Activated CD4-positive, alpha-beta memory T cell treated with anti-CD3 and anti-CD28 coated beads for 36 hours (primary cell): ENCODE measurements at regions of chr3 and their contacts with region 1.

Region 1: GRCh38 chr3:188294823-188295487 is 141.0 kb downstream of the LPP start:
- DNase-seq: no peak
- H3K4me3 Mint-ChIP-seq: no peak overlapping the region
- H3K27ac Mint-ChIP-seq: peak overlapping the region; percentile 72
- H3K4me1 Mint-ChIP-seq: peaks cover 79% of the 10 kb centered on the region
- H3K27me3 Mint-ChIP-seq: no peaks in the 10 kb centered on the region

Region 2: DNA sequence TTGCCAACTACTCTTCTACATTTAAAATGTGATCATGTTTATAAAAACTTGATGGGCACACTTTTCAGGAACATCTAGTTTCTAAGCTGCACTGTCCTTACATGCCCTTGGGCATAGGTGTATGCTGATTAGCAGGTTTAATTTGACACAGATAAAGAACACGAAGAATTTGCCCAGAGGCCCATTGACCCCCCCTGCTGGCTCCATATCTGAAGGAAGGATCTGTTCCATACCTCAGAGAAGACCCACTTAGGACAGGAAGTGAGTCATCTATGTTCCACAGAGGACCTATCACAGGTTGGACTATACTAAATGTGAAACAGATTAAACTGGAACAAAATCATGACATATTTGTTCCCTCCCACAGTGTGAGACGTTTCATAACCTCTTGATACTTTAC is 233.8 kb before region 1 on chr3:
- CTCF ChIA-PET with region 1: no interaction called
- POLR2A ChIA-PET with region 1: no interaction called
- intact Hi-C with region 1: no loop called
- DNase-seq: peak; percentile 81
- H3K4me3 Mint-ChIP-seq: peak overlapping the region; percentile 44
- H3K27ac Mint-ChIP-seq: peak overlapping the region; percentile 80
- H3K4me1 Mint-ChIP-seq: peaks cover 35% of the 10 kb centered on the region
- H3K27me3 Mint-ChIP-seq: no peaks in the 10 kb centered on the region

Region 3: DNA sequence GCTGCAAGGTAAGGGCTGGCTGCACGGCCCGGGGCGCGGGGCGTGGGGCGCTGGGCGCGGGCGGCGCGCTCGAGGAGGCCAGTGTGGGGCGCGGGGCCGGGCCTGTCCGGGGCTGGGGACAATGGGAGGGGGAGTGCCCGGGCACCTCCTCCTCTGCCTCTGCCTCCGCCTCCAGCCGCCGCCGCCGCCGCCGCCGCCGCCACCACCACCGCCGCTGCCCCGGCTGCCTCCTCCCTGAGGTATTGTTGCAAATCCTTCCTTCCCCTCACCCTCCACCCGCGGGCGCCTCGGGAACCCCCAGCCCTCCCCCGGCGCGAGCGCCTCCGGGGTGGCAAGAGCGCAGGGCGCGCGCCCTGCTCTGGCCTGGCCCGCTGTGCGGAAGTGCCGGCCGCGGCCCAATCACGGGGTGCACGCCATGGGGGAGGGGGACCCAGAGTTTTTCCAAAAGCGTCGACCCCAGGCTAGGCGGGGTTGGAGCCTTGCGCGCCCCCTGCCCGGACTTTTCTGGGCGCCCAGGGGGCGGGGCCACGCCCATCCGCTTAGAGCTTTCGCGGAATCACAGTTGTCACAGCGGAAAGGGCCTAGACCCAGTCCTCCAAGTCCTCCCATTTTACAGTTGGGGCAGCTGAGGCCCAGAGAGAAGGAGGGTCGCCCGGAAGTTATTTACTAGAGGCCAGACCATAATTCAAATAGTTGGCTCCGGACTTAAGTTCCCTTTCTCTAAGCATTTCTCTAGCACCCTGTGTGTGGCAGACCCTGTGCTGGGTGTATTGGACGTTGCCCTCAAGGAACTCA is 140.7 kb before region 1 on chr3 and contains the start of gene LPP:
- CTCF ChIA-PET with region 1: no interaction called
- POLR2A ChIA-PET with region 1: interaction called, 9 read pairs
- intact Hi-C with region 1: loop called (anchors 5 kb)
- DNase-seq: peak; percentile 91
- H3K4me3 Mint-ChIP-seq: peak within 1 kb of the TSS; percentile 88
- H3K27ac Mint-ChIP-seq: peak within 1 kb of the TSS; percentile 97
- H3K4me1 Mint-ChIP-seq: peaks cover 63% of the 10 kb centered on the region
- H3K27me3 Mint-ChIP-seq: no peaks in the 10 kb centered on the region
- total RNA-seq, gene LPP: 41.0 to 43.6 TPM

Region 4: DNA sequence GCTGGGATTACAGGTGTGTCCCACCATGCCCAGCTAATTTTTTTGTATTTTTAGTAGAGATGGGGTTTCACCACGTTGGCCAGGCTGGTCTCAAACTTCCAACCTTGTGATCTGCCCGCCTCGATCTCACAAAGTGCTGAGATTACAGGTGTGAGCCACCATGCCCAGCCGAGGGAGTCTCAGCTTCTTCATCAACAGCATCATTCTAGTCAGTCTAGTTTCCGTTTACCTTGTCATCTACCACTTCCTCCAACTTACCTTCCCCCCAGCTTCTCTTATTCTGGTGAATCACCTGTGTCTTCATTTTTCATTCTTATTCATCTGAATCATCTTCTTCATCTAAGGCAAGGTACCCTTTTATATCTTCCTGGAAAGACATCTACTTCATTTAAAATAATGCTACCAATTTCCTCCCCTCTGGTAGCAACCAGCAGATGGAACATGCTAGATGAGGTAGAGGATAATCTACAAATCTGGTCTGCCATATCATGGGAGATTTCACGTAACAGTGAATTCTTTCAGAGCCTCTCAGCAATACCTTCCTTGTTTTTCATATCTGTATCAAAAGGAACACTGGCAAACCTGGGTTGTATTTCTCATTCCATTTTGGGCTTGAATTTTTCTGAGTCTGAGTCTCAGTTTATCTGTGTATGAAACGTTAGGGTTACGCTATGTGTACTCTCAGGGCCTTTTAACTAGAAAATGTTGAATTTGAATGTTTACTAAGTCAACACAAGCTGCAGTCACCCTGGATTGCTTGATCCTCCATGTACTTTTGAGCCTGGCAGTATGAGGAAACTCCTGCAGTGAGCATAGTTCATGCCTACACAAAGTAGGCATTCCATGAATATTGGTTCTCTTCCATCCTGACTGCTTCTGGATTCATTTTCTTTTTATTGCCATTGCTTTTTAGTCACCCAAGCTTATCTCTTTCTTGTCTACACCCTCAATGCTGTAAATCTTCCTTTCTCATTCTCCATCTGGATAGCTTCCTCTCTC is 124.2 kb before region 1 on chr3:
- CTCF ChIA-PET with region 1: no interaction called
- POLR2A ChIA-PET with region 1: interaction called, 3 read pairs
- intact Hi-C with region 1: loop called (anchors 2 kb)
- DNase-seq: peak; percentile 82
- H3K4me3 Mint-ChIP-seq: peak overlapping the region; percentile 28
- H3K27ac Mint-ChIP-seq: peak overlapping the region; percentile 89
- H3K4me1 Mint-ChIP-seq: peaks cover 58% of the 10 kb centered on the region
- H3K27me3 Mint-ChIP-seq: no peaks in the 10 kb centered on the region

Region 5: GRCh38 chr3:188257384-188258026 is 37.5 kb before region 1 on chr3:
- CTCF ChIA-PET with region 1: interaction called, 3 read pairs
- POLR2A ChIA-PET with region 1: no interaction called
- intact Hi-C with region 1: loop called (anchors 1 kb)
- DNase-seq: no peak
- H3K4me3 Mint-ChIP-seq: no peak overlapping the region
- H3K27ac Mint-ChIP-seq: peak overlapping the region; percentile 47
- H3K4me1 Mint-ChIP-seq: peaks cover 49% of the 10 kb centered on the region
- H3K27me3 Mint-ChIP-seq: no peaks in the 10 kb centered on the region

Region 6: DNA sequence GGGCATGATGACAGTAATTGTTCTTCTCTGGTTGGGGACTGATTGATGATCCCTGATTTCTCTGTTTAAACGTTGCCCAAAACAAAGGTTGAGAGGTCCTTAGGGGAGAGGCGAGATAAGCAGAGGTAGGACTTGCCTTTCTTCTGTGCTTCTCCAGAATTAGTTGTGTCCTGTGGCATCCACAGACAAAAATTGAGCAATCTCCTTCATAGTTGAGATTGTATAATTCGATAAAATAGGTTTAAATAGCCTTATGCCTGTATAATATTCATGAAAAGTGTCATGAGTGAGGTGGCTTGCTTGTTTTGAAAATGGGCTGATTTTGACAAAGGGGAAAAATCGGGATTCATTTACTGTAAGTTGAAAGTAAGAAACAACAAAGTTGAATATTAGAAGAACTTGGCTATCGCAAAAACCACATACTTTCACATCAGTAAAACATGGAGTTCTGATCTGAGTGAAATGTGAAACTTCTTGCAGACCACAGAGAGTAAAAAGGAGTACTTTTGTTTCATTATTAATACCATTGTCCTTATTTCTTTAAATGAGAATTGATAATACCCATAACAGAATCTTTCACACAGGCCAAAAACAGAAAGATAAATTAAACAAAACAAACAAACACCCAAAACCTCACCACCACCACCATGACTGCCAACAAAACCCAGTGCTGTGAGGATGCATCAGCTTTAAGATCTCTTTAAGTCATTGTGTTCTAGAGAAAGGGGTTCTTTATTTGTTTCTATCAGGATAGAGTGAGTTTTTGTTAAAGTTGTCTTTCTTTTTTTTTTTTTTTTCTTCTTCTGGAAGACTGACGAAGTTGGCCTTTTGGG is 14.7 kb after region 1 on chr3:
- CTCF ChIA-PET with region 1: no interaction called
- POLR2A ChIA-PET with region 1: interaction called, 3 read pairs
- intact Hi-C with region 1: loop called (anchors 1 kb)
- DNase-seq: peak; percentile 49
- H3K4me3 Mint-ChIP-seq: peak overlapping the region; percentile 34
- H3K27ac Mint-ChIP-seq: peak overlapping the region; percentile 64
- H3K4me1 Mint-ChIP-seq: peaks cover 22% of the 10 kb centered on the region
- H3K27me3 Mint-ChIP-seq: no peaks in the 10 kb centered on the region

Region 7: GRCh38 chr3:188320757-188321156 is 25.8 kb after region 1 on chr3:
- CTCF ChIA-PET with region 1: interaction called, 3 read pairs
- POLR2A ChIA-PET with region 1: interaction called, 8 read pairs
- intact Hi-C with region 1: loop called (anchors 1 kb)
- DNase-seq: no peak
- H3K4me3 Mint-ChIP-seq: no peak overlapping the region
- H3K27ac Mint-ChIP-seq: no peak overlapping the region
- H3K4me1 Mint-ChIP-seq: peaks cover 58% of the 10 kb centered on the region
- H3K27me3 Mint-ChIP-seq: peaks cover 2% of the 10 kb centered on the region

Region 8: GRCh38 chr3:188389711-188390342 is 94.9 kb after region 1 on chr3:
- CTCF ChIA-PET with region 1: no interaction called
- POLR2A ChIA-PET with region 1: interaction called, 4 read pairs
- intact Hi-C with region 1: loop called (anchors 2 kb)
- DNase-seq: peak; percentile 74
- H3K4me3 Mint-ChIP-seq: no peak overlapping the region
- H3K27ac Mint-ChIP-seq: peak overlapping the region; percentile 50
- H3K4me1 Mint-ChIP-seq: peaks cover 27% of the 10 kb centered on the region
- H3K27me3 Mint-ChIP-seq: no peaks in the 10 kb centered on the region